ENCODE measurements at regions of chr17 and their contacts with region 1.

Region 1: GRCh38 chr17:36127199-36127893 is 23.7 kb downstream of the CCL4 start:
- DNase-seq: peak; percentile 80
- ATAC-seq: peak; percentile 93
- H3K4me3 ChIP-seq: peak overlapping the region in 4 of 5 experiments; percentile 22 to 41 (median 31)
- H3K4me3 Mint-ChIP-seq: peak overlapping the region; percentile 79
- H3K27ac ChIP-seq: peak overlapping the region; percentile 71 to 89
- H3K27ac Mint-ChIP-seq: peak overlapping the region; percentile 86
- H3K4me1 ChIP-seq: peaks cover 64 to 71% of the 10 kb centered on the region in 2 donors
- H3K4me1 Mint-ChIP-seq: peaks cover 62% of the 10 kb centered on the region
- H3K27me3 ChIP-seq: no peaks in the 10 kb centered on the region
- H3K27me3 Mint-ChIP-seq: no peaks in the 10 kb centered on the region
- CTCF ChIP-seq: no peak

Region 2: DNA sequence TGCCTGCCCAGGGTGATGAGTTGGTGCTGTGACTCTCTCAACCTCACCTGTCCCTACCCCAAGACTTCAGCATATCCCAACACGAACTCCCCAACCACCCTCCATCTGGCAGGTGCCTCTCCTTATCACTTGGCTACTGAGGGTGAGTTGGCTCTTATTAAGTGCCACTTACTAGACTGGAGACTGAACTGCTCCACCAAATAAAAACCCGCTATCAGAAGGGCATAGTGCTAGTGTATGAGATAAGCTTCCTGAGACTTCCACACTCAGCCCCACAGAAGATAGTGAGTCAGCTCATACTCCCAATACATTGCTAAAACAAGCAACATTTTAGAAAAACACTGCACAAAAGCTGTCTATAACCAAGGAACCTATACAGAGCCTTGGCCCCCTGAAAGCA is 79.3 kb before region 1 on chr17:
- CTCF ChIA-PET with region 1: no interaction called
- POLR2A ChIA-PET with region 1: no interaction called
- intact Hi-C with region 1: no loop called
- DNase-seq: no peak
- ATAC-seq: no peak
- H3K4me3 ChIP-seq: no peak overlapping the region
- H3K4me3 Mint-ChIP-seq: no peak overlapping the region
- H3K27ac ChIP-seq: no peak overlapping the region
- H3K27ac Mint-ChIP-seq: no peak overlapping the region
- H3K4me1 ChIP-seq: no peaks in the 10 kb centered on the region
- H3K4me1 Mint-ChIP-seq: no peaks in the 10 kb centered on the region
- H3K27me3 ChIP-seq: peaks cover 0 to 9% (median 6%) of the 10 kb centered on the region in 4 experiments
- H3K27me3 Mint-ChIP-seq: peaks cover 38% of the 10 kb centered on the region
- CTCF ChIP-seq: no peak

Region 3: GRCh38 chr17:36072431-36073121 is 54.8 kb before region 1 on chr17:
- CTCF ChIA-PET with region 1: interaction called, 6 read pairs
- POLR2A ChIA-PET with region 1: interaction called, 5 read pairs
- intact Hi-C with region 1: loop called (anchors 5 kb)
- DNase-seq: peak; percentile 64
- ATAC-seq: peak; percentile 47
- H3K4me3 ChIP-seq: no peak overlapping the region
- H3K4me3 Mint-ChIP-seq: no peak overlapping the region
- H3K27ac ChIP-seq: no peak overlapping the region
- H3K27ac Mint-ChIP-seq: no peak overlapping the region
- H3K4me1 ChIP-seq: peaks cover 4 to 8% of the 10 kb centered on the region in 2 donors
- H3K4me1 Mint-ChIP-seq: peaks cover 14% of the 10 kb centered on the region
- H3K27me3 ChIP-seq: no peaks in the 10 kb centered on the region
- H3K27me3 Mint-ChIP-seq: no peaks in the 10 kb centered on the region
- CTCF ChIP-seq: peak; percentile 71

Region 4: DNA sequence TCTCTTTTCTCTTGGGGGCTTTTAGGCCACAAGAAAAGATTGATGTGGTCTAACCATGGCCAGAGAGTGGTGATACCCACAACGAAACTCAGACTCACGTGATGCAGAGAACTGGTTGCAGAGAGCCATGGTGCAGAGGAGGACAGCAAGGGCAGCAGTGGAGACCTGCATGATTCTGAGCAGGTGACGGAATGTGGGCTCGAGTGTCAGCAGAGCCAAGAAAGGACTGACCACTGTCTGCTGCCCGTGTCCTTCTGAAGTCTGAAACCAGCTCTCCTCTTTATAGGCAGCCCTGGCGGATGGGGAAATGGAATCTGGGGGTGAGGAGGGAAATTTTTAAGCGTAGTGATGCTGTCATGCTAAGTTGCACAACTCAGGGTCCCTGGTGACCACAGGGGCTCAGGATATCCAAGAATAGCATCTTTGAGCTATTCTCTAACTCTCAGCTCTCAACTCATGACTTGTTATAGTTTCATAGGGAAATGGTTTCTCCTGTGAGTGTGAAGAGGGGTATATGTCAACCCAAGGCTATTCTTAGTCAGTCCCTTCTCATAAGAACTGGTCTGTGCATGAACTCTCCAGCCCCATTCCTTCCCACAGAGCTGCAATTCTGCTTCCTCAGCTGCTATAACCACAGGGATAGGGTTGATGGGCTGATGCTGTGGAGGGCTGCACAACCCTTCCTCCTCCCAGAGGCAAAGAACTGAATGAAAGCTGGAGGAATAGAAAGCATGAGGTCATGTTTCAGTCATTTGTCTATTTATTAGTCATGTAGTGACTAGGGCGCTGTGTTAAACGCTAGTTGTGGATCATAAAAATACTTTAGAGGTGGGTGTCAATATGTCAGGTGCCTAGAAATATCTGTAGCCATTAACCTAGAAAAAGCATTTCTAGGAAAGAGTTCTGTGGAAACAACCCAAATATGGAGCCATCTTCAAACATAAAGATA is 37.2 kb before region 1 on chr17 and contains the start of gene CCL3:
- CTCF ChIA-PET with region 1: interaction called, 3 read pairs
- POLR2A ChIA-PET with region 1: no interaction called
- intact Hi-C with region 1: loop called (anchors 2 kb)
- DNase-seq: peak; percentile 84
- ATAC-seq: peak; percentile 79
- H3K4me3 ChIP-seq: peak within 1 kb of the TSS; percentile 32 to 43 (median 36)
- H3K4me3 Mint-ChIP-seq: peak within 1 kb of the TSS; percentile 89
- H3K27ac ChIP-seq: peak within 1 kb of the TSS; percentile 58 to 85
- H3K27ac Mint-ChIP-seq: peak within 1 kb of the TSS; percentile 87
- H3K4me1 ChIP-seq: peaks cover 50 to 55% of the 10 kb centered on the region in 2 donors
- H3K4me1 Mint-ChIP-seq: peaks cover 70% of the 10 kb centered on the region
- H3K27me3 ChIP-seq: no peaks in the 10 kb centered on the region
- H3K27me3 Mint-ChIP-seq: no peaks in the 10 kb centered on the region
- CTCF ChIP-seq: no peak
- total RNA-seq, gene CCL3: 4.5 and 5.7 TPM in 2 replicates

Region 5: GRCh38 chr17:36188891-36189306 is 61.6 kb after region 1 on chr17:
- CTCF ChIA-PET with region 1: no interaction called
- POLR2A ChIA-PET with region 1: no interaction called
- intact Hi-C with region 1: no loop called
- DNase-seq: peak; percentile 57
- ATAC-seq: peak; percentile 66
- H3K4me3 ChIP-seq: no peak overlapping the region
- H3K4me3 Mint-ChIP-seq: peak overlapping the region; percentile 61
- H3K27ac ChIP-seq: no peak overlapping the region
- H3K27ac Mint-ChIP-seq: peak overlapping the region; percentile 53
- H3K4me1 ChIP-seq: peaks cover 21 to 25% of the 10 kb centered on the region in 2 donors
- H3K4me1 Mint-ChIP-seq: peaks cover 12% of the 10 kb centered on the region
- H3K27me3 ChIP-seq: peaks cover 0 to 40% (median 4%) of the 10 kb centered on the region in 4 experiments
- H3K27me3 Mint-ChIP-seq: no peaks in the 10 kb centered on the region
- CTCF ChIP-seq: no peak

Measured in B cell (primary cell).